KBM-7 (cell line): ENCODE measurements at regions of chr1 and their contacts with region 1.

Region 1: GRCh38 chr1:153967082-153968000 is at the start of gene CREB3L4:
- DNase-seq: peak; percentile 98

Region 2: DNA sequence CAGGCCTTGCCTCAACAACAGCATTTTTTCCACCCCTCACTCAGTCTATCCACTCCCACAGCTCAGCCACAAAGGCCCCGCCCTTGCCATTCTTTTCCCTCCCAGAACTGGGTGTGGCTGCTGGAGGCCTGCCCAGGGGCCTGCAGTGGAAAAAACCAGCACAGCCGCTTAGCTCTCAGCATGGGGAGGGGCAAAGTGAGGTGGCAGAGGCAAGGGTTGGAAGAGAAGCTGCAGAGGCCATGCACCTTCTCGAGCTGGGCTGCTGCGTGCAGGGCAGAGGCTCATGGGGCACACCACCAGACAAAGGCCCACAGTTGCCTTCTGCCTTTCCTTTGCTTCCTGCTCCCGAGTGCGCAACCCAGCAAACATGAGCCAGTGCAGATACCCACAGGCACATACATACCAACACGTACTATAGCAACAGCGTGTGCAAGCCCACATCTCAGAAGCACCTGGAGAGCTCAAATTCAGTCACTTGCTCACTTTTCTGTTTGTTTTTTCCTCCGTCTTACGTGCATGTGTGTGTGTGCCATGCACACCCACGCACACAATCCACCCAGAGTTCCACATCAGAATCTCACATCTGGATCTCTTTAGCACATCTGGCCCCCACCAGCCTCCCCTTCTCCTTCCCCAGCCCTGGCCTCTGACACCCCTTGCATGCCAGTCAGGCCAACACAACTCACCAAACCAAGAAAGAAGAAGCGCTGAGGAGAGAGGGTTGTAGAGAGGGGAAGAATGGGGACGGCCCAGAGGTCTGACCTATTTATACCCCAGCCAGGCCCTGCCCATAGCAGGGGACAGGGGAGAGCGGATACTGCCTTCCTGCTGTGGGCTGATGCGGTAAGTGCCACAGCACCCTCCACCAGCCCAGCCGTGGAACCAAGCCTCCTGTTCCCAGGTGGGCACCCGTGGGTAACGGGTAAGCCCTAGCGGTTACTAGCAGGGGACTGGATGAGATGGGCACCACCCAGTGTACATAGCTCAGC is 422.0 kb before region 1 on chr1 and contains the start of gene S100A4:
- in situ Hi-C with region 1: loop called (anchors 25 kb)
- DNase-seq: peak; percentile 98

Region 3: GRCh38 chr1:153805042-153805745 is 162.1 kb before region 1 on chr1:
- in situ Hi-C with region 1: loop called (anchors 25 kb)
- DNase-seq: peak; percentile 85